ENCODE measurements at regions of chr4 and their contacts with region 1.

Region 1: GRCh38 chr4:25376754-25377571 is at the start of gene ANAPC4:
- DNase-seq: peak; percentile 94
- H3K4me3 ChIP-seq: peak within 1 kb of the TSS; percentile 88 to 96
- H3K27ac ChIP-seq: peak within 1 kb of the TSS; percentile 76 to 79
- H3K4me1 ChIP-seq: no peaks in the 10 kb centered on the region
- H3K27me3 ChIP-seq: no peaks in the 10 kb centered on the region
- CTCF ChIP-seq: peak in 2 of 4 experiments; percentile 27 to 46
- POLR2A ChIP-seq: peak; percentile 57
- total RNA-seq, gene ANAPC4: 20.2 to 20.7 TPM

Region 2: GRCh38 chr4:25159884-25160713 is 216.9 kb before region 1 on chr4 and contains the start of gene SEPSECS:
- intact Hi-C with region 1: loop called (anchors 10 kb)
- DNase-seq: peak; percentile 98
- H3K4me3 ChIP-seq: peak within 1 kb of the TSS; percentile 84 to 90
- H3K27ac ChIP-seq: peak within 1 kb of the TSS; percentile 94 to 95
- H3K4me1 ChIP-seq: no peaks in the 10 kb centered on the region
- H3K27me3 ChIP-seq: no peaks in the 10 kb centered on the region
- CTCF ChIP-seq: peak in 1 of 4 experiments; percentile 23
- POLR2A ChIP-seq: peak; percentile 91
- total RNA-seq, gene SEPSECS: 7.4 to 12.3 TPM

Region 3: GRCh38 chr4:25312496-25313200 is 64.3 kb before region 1 on chr4 and contains the start of gene ZCCHC4:
- intact Hi-C with region 1: loop called (anchors 5 kb)
- DNase-seq: peak; percentile 86
- H3K4me3 ChIP-seq: peak within 1 kb of the TSS; percentile 48 to 77
- H3K27ac ChIP-seq: peak within 1 kb of the TSS; percentile 54 to 71
- H3K4me1 ChIP-seq: no peaks in the 10 kb centered on the region
- H3K27me3 ChIP-seq: no peaks in the 10 kb centered on the region
- CTCF ChIP-seq: peak; percentile 86 to 98 (median 98)
- POLR2A ChIP-seq: no peak
- total RNA-seq, gene ZCCHC4: 9.4 to 17.1 TPM

Measured in prostate gland (tissue), 2 donors.